ENCODE measurements at regions of chr12 and their contacts with region 1.

Region 1: GRCh38 chr12:121095544-121096198 is 37.0 kb upstream of the P2RX7 start:
- DNase-seq: peak in 1 of 2 donors; percentile 86
- H3K4me3 ChIP-seq: peak overlapping the region; percentile 25 to 35
- H3K27ac ChIP-seq: no peak overlapping the region
- H3K4me1 ChIP-seq: peaks cover 12% of the 10 kb centered on the region
- H3K27me3 ChIP-seq: no peaks in the 10 kb centered on the region
- CTCF ChIP-seq: peak; percentile 45 to 75 (median 75)
- POLR2A ChIP-seq: no peak

Region 2: GRCh38 chr12:119780786-119781434 is 1314.8 kb before region 1 on chr12:
- intact Hi-C with region 1: no loop called
- DNase-seq: no peak
- H3K4me3 ChIP-seq: no peak overlapping the region
- H3K27ac ChIP-seq: no peak overlapping the region
- H3K4me1 ChIP-seq: no peaks in the 10 kb centered on the region
- H3K27me3 ChIP-seq: no peaks in the 10 kb centered on the region
- CTCF ChIP-seq: peak; percentile 54 to 67 (median 66)
- POLR2A ChIP-seq: no peak

Region 3: GRCh38 chr12:120598674-120599463 is 496.8 kb before region 1 on chr12:
- intact Hi-C with region 1: loop called (anchors 10 kb)
- DNase-seq: no peak
- H3K4me3 ChIP-seq: no peak overlapping the region
- H3K27ac ChIP-seq: no peak overlapping the region
- H3K4me1 ChIP-seq: no peaks in the 10 kb centered on the region
- H3K27me3 ChIP-seq: no peaks in the 10 kb centered on the region
- CTCF ChIP-seq: no peak
- POLR2A ChIP-seq: no peak

Region 4: GRCh38 chr12:121530600-121531355 is 435.1 kb after region 1 on chr12:
- intact Hi-C with region 1: no loop called
- DNase-seq: no peak
- H3K4me3 ChIP-seq: no peak overlapping the region
- H3K27ac ChIP-seq: peak overlapping the region; percentile 38
- H3K4me1 ChIP-seq: peaks cover 41% of the 10 kb centered on the region
- H3K27me3 ChIP-seq: no peaks in the 10 kb centered on the region
- CTCF ChIP-seq: no peak
- POLR2A ChIP-seq: no peak

Measured in vagina (tissue), 2 donors.